Ascending aorta (tissue), 2 donors: ENCODE measurements at regions of chr10 and their contacts with region 1.

Region 1: DNA sequence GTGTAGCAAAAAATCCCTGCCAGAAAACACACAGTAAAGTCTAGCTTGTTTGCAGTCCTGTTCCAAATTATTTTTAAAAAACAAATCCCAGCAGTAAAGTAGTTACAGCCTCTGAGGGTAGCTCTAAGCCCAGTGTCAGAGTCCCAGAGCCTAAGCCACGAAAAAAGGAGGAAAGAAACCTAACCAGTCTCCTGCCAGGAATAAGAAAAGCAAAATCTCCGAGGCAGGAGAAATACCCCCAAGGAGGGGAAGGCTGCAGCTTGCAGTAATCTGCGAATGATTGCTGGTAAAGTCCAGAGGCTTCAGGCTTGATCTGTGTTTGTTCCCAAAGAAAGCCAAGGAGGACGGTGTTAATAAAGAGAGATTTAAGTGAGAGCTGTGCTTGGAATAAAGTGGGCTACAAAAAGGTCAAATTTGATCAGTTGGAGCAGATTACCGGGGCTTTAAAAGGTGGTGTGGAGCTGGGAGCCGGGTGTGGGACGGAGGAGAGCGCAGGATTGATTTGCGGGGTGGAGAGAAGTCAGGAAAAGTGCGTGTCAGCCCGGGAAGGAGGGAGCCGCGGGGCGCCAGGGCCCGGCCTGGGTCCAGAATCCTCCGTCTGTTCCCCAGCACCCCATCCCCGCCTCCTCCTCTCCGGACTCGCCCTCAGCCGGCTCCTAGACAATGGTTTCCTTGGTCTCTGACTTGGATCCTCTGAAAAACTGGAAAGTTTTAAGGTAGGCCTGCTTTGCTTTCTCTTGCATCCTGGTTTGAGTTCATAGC is 219.4 kb upstream of the CELF2 start:
- DNase-seq: no peak
- H3K4me3 ChIP-seq: peak overlapping the region; percentile 25 to 59
- H3K27ac ChIP-seq: peak overlapping the region; percentile 90 to 93
- H3K4me1 ChIP-seq: peaks cover 5 to 28% of the 10 kb centered on the region in 2 donors
- H3K27me3 ChIP-seq: no peaks in the 10 kb centered on the region
- CTCF ChIP-seq: peak in 1 of 3 experiments; percentile 4

Region 2: GRCh38 chr10:9922126-9922870 is 876.0 kb before region 1 on chr10:
- intact Hi-C with region 1: no loop called
- DNase-seq: no peak
- H3K4me3 ChIP-seq: no peak overlapping the region
- H3K27ac ChIP-seq: no peak overlapping the region
- H3K4me1 ChIP-seq: no peaks in the 10 kb centered on the region
- H3K27me3 ChIP-seq: no peaks in the 10 kb centered on the region
- CTCF ChIP-seq: no peak

Region 3: DNA sequence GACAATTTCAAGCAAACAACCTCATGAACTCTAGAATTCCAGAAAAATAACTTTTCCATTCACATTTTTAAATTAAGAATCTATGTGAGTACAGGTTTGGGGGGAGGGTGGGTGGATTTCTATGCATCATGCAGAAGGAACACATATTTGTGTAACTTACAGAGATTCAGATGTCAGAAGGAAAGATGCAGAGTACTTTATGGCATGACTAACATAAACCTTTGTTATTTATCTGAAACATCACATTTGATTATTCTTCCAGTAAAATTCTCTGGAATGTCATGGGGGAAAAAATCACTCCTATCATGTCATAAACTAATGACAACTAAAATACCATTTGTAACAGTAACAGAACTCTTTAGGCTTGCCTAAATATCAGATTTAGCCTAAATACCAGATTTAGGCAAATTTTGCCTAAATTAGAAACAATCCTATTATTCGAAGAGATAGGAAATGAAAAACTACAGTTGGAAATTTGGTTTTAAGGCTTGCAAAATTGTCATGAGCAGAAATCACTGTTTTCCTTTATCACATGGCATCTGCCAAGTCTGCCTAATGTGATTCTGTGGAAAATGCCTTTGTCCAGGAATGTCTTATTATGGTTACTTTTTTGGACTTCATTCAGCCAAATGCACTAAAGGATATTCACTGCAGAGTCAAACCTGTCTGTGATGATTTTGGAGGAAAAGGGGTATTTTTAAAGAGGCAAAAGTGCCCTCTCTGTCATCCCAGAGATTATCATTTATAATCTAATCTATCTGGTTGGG is 308.3 kb before region 1 on chr10:
- intact Hi-C with region 1: no loop called
- DNase-seq: no peak
- H3K4me3 ChIP-seq: no peak overlapping the region
- H3K27ac ChIP-seq: no peak overlapping the region
- H3K4me1 ChIP-seq: no peaks in the 10 kb centered on the region
- H3K27me3 ChIP-seq: no peaks in the 10 kb centered on the region
- CTCF ChIP-seq: no peak

Region 4: GRCh38 chr10:10605551-10606081 is 192.7 kb before region 1 on chr10:
- intact Hi-C with region 1: loop called (anchors 5 kb)
- DNase-seq: peak in 1 of 2 donors; percentile 81
- H3K4me3 ChIP-seq: no peak overlapping the region
- H3K27ac ChIP-seq: peak overlapping the region; percentile 74 to 80
- H3K4me1 ChIP-seq: no peaks in the 10 kb centered on the region
- H3K27me3 ChIP-seq: no peaks in the 10 kb centered on the region
- CTCF ChIP-seq: no peak

Region 5: DNA sequence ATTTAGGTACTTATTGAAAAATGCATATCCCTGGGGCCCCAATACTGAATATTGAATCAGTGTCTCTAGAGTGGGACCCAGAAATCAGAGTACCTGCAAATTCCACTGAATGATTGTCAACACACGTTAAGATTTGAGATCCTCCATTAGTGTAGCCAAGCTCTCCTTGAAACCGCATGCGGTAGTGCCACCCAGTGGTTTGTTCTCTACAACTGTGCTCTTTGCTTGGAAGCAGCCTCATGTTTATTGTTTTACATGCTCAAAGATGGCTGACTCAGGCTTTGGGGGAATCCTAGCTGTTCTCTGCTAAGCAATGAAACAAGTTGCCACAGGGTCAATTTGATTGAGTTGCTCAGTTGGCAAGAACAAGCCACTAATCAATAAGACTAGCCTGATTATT is 120.8 kb before region 1 on chr10:
- intact Hi-C with region 1: no loop called
- DNase-seq: peak in 1 of 2 donors; percentile 66
- H3K4me3 ChIP-seq: no peak overlapping the region
- H3K27ac ChIP-seq: no peak overlapping the region
- H3K4me1 ChIP-seq: no peaks in the 10 kb centered on the region
- H3K27me3 ChIP-seq: no peaks in the 10 kb centered on the region
- CTCF ChIP-seq: peak; percentile 36 to 59 (median 36)

Region 6: GRCh38 chr10:10824591-10825148 is 26.4 kb after region 1 on chr10:
- intact Hi-C with region 1: loop called (anchors 2 kb)
- DNase-seq: peak in 1 of 2 donors; percentile 88
- H3K4me3 ChIP-seq: peak overlapping the region in 1 of 2 donors; percentile 49
- H3K27ac ChIP-seq: peak overlapping the region; percentile 78 to 79
- H3K4me1 ChIP-seq: peaks cover 0 to 46% of the 10 kb centered on the region in 2 donors
- H3K27me3 ChIP-seq: no peaks in the 10 kb centered on the region
- CTCF ChIP-seq: no peak

Region 7: DNA sequence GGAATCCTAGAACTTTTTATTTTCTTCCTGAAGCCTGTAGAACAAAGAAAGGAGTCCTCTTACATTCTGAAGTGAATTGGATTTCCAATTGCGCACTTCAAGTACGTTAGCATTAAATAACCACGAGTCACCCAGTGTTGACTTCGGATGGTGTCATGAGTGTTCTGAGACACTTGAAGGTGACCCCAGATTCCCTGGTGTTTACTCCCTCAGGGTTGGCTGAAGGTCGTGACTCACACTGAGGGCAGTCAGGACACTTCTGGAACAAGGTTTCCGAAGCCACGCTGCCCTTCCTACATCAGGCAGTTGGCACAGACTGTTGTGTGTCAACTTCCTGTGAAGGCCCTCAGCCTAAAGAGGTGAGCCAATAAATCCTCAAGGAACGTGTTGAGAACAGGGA is 32.8 kb after region 1 on chr10:
- intact Hi-C with region 1: loop called (anchors 2 kb)
- DNase-seq: peak; percentile 53 to 94
- H3K4me3 ChIP-seq: peak overlapping the region in 1 of 2 donors; percentile 32
- H3K27ac ChIP-seq: peak overlapping the region; percentile 84 to 86
- H3K4me1 ChIP-seq: peaks cover 0 to 17% of the 10 kb centered on the region in 2 donors
- H3K27me3 ChIP-seq: no peaks in the 10 kb centered on the region
- CTCF ChIP-seq: no peak

Region 8: GRCh38 chr10:10872035-10872673 is 73.9 kb after region 1 on chr10:
- intact Hi-C with region 1: loop called (anchors 2 kb)
- DNase-seq: peak in 1 of 2 donors; percentile 84
- H3K4me3 ChIP-seq: peak overlapping the region in 1 of 2 donors; percentile 7
- H3K27ac ChIP-seq: peak overlapping the region; percentile 83 to 88
- H3K4me1 ChIP-seq: peaks cover 0 to 33% of the 10 kb centered on the region in 2 donors
- H3K27me3 ChIP-seq: no peaks in the 10 kb centered on the region
- CTCF ChIP-seq: no peak

Region 9: DNA sequence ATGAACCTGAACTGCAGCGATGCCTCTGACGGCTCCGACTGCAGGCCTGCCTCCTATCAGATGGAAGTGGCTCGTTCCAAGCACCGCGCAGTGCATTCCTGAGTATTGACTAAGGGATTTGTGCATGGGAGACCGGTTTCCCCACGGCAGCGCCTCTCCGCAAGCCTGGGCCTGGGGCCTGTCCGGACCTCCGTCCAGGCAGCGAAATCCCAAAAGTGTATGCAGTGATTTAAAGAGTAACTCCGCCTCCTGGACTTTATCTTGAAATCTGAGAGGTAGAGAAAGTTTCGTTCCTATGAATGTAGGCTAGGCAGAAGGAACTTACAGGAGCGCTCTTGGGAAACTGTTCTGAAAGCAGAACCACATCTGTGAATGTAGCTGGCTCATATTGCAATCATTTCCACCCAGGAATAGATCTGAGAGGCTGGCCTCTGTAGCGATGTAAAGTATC is 113.2 kb after region 1 on chr10:
- intact Hi-C with region 1: loop called (anchors 2 kb)
- DNase-seq: peak; percentile 19 to 91
- H3K4me3 ChIP-seq: peak overlapping the region; percentile 33 to 59
- H3K27ac ChIP-seq: peak overlapping the region; percentile 75 to 79
- H3K4me1 ChIP-seq: peaks cover 0 to 19% of the 10 kb centered on the region in 2 donors
- H3K27me3 ChIP-seq: no peaks in the 10 kb centered on the region
- CTCF ChIP-seq: no peak

Region 10: DNA sequence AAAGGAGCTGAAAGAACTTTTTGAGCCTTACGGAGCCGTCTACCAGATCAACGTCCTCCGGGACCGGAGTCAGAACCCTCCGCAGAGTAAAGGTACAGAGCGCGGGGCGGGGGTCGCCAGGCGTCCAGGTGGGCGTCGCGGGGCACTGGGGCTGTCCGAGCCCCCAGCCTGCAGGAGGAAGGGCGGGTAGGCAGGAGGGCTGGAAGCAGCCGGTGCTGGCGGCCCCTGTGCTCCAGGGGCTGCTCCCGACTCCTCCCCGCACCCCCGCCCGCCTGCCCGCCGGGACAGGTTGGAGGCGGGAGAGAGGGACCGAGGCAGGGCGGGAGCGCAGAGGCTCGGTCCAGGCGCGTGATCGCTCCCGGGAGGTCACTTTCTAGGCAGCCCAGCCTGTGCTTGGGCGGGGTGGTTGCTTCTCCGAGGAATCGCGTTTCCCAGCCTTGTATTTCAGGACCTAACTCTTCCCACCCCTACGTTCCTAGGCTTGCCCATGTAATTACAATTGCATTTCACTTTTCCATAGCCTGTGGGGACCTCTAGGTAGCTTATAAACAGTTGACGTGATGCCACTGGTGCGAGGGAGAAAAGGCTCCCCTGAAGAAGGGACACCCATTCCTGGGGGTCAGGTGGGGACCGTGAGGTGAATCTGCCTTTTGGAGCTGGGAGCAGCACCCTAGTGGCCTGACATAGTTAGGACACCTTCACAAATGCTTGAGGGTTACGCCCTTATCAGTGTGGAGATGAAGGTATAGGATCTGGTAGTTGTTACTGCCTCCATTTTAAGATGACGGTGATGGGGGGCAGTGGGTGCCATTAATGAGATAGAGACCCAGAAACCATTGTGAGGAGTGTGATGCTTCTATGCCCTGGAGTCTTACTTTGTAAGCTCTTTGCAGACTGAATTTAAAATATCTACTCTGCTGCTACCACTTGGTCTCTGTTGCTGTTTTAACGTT is 367.6 kb after region 1 on chr10:
- intact Hi-C with region 1: loop called (anchors 5 kb)
- DNase-seq: peak in 1 of 2 donors; percentile 74
- H3K4me3 ChIP-seq: peak overlapping the region; percentile 53 to 91
- H3K27ac ChIP-seq: peak overlapping the region; percentile 62 to 74
- H3K4me1 ChIP-seq: peaks cover 3 to 5% of the 10 kb centered on the region in 2 donors
- H3K27me3 ChIP-seq: no peaks in the 10 kb centered on the region
- CTCF ChIP-seq: peak in 2 of 3 experiments; percentile 25 to 30